ENCODE measurements at regions of chr1 and their contacts with region 1.

Region 1: DNA sequence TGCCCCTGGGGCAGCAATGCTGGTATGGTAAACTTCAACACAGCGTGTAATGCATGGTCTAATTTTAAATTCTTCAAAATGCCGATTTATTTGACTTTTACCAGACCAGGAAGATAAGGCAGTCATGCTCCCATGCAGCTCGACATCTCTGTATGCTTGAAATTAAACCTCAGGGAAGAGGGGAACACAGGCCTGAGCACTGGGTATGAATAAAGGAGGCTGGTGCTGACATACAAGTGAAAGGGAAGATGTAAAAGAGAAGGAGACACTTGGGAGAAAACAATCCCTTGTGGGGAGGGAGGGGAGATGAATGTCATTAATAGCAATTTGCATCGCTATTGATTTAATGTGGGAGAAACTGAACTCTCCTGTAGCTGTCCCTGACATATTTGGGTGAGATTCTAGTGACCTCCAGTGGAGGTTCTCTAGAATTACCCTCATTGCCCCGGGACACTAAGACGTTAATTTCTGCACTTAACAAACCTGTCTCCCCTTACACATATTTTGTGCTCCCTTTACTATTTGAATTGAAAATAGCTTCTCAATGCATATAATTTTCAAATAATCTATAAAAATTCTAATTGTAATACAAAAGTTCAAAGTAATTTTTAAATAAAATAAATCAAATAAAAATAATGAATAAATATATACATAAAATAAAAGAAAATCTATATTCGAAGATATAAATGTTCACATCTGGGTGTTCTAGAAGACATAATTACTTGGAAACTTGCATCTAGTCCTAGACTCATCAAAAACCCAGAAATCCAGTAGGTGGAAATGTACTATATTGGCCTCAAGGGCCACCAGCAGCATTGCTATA is 283.1 kb downstream of the LMX1A start:
- DNase-seq: no peak
- H3K4me3 ChIP-seq: no peak overlapping the region
- H3K27ac ChIP-seq: no peak overlapping the region
- H3K4me1 ChIP-seq: no peaks in the 10 kb centered on the region
- H3K27me3 ChIP-seq: no peaks in the 10 kb centered on the region
- CTCF ChIP-seq: peak; percentile 68

Region 2: DNA sequence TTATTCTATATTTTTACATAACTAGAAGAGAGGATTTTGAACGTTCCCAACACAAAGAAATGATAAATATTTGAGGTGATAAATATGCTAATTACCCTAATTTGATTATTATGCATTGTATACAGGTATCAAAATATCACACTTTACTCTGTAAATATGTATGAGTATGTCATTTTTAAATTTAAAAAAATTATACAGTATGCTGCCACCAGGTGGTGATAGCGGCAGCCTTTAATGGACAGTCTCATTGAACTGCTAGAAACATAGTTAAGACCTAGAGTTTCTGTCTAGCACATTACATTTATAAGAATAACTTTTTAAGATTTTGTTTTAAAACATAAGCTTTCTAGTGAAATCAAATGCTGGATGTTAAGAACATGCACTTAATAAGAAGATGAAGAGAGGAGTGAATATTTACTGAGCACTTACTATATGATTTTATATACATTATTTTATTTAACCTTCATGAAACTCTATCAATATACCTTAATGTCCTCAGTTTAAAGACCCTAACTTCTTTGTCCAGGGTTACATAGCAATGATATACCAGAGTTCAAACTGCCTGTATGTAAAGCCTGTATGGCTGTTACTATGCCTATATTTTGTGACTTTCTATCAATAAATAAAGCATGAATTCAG is 1544.6 kb before region 1 on chr1:
- intact Hi-C with region 1: loop called (anchors 10 kb)
- DNase-seq: peak; percentile 26
- H3K4me3 ChIP-seq: no peak overlapping the region
- H3K27ac ChIP-seq: no peak overlapping the region
- H3K4me1 ChIP-seq: no peaks in the 10 kb centered on the region
- H3K27me3 ChIP-seq: no peaks in the 10 kb centered on the region
- CTCF ChIP-seq: peak; percentile 50

Region 3: GRCh38 chr1:164163289-164163864 is 910.0 kb before region 1 on chr1:
- intact Hi-C with region 1: loop called (anchors 10 kb)
- DNase-seq: no peak
- H3K4me3 ChIP-seq: no peak overlapping the region
- H3K27ac ChIP-seq: no peak overlapping the region
- H3K4me1 ChIP-seq: no peaks in the 10 kb centered on the region
- H3K27me3 ChIP-seq: no peaks in the 10 kb centered on the region
- CTCF ChIP-seq: no peak

Region 4: DNA sequence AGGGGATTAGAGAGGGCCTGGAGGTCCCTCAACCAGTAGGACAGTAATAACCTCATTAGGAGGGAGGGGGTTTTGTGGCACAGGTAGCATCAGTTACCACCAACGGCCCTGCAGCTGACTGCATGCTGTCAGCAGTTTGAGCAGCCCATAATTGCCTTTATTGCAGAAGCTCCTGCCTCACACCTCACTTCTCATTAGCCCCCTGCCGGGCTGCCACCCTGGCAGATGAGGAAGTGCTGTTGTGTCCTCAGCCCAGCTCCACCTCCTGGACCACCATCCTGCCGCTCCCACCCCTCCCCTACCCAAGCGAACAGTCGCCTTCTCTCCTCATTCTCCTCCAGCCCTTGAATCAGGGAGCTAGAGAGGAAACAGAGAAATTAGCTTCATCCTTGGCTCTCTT is 45.7 kb after region 1 on chr1:
- intact Hi-C with region 1: no loop called
- DNase-seq: no peak
- H3K4me3 ChIP-seq: no peak overlapping the region
- H3K27ac ChIP-seq: no peak overlapping the region
- H3K4me1 ChIP-seq: no peaks in the 10 kb centered on the region
- H3K27me3 ChIP-seq: peaks cover 6% of the 10 kb centered on the region
- CTCF ChIP-seq: no peak

Measured in colonic mucosa (tissue), 4 donors.